ENCODE measurements at regions of chr17 and their contacts with region 1.

Region 1: DNA sequence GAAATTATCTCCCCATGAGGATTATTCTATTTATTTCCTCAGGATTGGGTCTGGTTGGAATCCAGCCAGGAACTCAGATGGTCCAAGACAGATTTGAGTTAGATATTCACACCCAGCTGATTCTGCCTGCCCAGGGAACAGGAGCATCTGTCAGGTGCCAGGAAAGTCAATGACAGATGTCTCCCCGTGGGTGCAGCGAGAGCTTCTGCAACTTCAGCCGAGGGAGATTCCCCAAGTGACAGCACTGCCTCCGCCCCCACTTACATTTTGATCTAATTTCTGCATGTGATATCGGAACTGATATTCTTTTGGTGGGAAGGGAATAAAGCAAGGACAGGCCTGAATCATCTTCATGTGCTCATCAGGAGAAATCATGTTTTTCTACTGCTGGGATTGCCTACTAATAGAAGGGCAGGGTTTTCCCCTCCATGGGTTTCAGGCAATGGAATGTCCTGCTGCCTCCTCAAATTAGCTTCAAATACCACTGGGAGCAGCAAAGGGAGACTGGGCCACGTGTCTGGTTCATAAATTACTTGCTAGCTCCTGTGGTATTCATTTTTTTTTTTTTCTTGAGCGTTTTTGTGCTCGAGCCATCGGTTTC is 15.7 kb upstream of the DHX8 start:
- DNase-seq: no peak
- ATAC-seq: peak in 1 of 4 donors; percentile 44
- H3K4me3 ChIP-seq: no peak overlapping the region
- H3K27ac ChIP-seq: no peak overlapping the region
- H3K4me1 ChIP-seq: peaks cover 0 to 17% (median 3%) of the 10 kb centered on the region in 12 donors
- H3K27me3 ChIP-seq: no peaks in the 10 kb centered on the region
- CTCF ChIP-seq: no peak
- POLR2A ChIP-seq: no peak

Region 2: DNA sequence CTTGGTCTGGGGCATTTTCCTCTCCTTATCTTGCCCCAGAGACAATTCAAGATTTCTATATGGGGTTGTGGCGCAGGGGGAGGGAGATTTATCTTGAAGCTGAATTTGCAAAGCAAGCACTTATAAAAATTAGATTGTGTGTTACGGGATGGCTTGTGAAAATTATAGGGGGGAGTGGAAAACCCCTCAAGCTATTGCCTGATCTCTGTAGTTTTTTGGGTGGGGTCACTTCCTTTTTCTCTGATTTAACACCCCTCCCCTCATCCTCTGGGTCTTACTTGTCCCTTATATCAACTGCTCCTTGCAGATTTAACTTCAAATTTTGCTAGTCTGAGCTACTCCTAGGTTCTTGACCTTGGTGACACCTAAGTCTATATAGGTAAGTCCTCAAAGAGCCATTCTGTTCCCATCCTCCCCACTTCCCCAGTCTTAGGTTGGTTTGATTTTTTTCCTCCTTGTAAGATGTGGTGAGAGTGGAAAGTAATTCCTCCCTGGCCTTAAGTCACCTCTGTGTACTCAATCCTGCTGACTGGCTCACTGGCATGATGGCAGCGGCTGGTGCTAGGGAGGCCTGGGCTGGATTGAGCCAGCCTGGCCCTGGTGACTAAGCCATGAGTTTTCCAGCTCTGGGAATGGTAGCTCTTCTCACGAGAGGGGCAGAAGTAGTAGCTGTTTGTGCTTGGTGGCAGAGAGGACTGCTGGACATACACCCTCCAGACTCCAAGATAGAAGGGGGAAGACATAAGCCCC is 67.0 kb before region 1 on chr17:
- intact Hi-C with region 1: loop called in 1 of 10 experiments (anchors 5 kb)
- DNase-seq: no peak
- ATAC-seq: peak; percentile 30 to 62 (median 37)
- H3K4me3 ChIP-seq: peak overlapping the region in 9 of 12 donors; percentile 72 to 93 (median 77)
- H3K27ac ChIP-seq: peak overlapping the region in 4 of 12 donors; percentile 8 to 94 (median 56)
- H3K4me1 ChIP-seq: peaks cover 0 to 37% (median 18%) of the 10 kb centered on the region in 12 donors
- H3K27me3 ChIP-seq: no peaks in the 10 kb centered on the region
- CTCF ChIP-seq: no peak
- POLR2A ChIP-seq: no peak